Activated CD4-positive, alpha-beta memory T cell treated with anti-CD3 and anti-CD28 coated beads for 36 hours (primary cell): ENCODE measurements at regions of chr9 and their contacts with region 1.

Region 1: DNA sequence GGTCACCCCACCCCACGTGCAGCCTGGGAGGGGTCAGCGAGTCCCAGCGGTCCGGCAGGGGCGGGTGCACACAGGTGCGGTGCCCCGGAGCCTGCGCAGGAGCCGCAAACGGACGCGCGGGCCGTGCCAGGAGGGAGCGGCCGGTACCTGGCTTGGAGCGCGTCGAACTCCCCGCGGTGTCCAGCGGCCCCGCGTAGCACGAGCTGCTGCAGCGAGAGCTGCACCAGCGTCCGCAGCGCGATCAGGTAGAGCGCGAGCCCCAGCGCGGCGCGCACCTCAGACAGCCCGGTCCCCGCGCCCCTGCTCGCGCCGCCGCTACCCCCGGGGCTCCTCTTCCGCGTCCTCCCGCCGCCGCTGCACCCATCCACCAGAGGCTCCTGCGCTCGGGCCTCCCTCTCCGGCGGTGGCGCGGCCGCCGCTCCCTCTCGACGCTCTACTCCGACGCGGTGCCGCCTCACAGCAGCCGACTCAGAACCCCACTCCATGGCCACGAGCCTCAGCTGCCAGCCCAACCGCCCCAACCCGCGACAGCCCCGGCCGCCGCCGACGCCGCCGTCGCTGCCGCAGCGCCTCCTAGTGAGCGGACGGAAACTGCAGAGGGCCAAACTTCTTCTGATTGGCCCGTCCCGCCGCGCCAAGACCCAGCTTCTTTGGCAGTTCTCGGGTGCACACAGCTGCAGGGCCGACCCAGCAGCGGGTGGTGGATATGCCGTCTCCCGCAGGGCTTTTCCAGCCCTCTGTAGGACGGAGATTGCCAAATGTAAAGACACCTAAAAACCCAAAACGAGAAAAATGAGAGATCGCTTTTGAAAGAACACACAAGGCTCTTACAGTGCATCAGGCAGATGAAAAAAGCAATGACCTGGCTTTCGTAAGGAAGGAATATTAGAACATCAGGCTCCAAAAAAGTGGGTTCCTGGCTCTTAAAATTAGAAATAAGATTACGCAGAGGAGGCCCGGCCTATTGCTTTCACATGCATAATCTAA is at the start of gene ERMP1:
- DNase-seq: peak; percentile 94
- H3K4me3 Mint-ChIP-seq: peak within 1 kb of the TSS; percentile 86
- H3K27ac Mint-ChIP-seq: peak within 1 kb of the TSS; percentile 65
- H3K4me1 Mint-ChIP-seq: peaks cover 42% of the 10 kb centered on the region
- H3K27me3 Mint-ChIP-seq: no peaks in the 10 kb centered on the region
- total RNA-seq, gene ERMP1: 23.2 to 24.0 TPM

Region 2: DNA sequence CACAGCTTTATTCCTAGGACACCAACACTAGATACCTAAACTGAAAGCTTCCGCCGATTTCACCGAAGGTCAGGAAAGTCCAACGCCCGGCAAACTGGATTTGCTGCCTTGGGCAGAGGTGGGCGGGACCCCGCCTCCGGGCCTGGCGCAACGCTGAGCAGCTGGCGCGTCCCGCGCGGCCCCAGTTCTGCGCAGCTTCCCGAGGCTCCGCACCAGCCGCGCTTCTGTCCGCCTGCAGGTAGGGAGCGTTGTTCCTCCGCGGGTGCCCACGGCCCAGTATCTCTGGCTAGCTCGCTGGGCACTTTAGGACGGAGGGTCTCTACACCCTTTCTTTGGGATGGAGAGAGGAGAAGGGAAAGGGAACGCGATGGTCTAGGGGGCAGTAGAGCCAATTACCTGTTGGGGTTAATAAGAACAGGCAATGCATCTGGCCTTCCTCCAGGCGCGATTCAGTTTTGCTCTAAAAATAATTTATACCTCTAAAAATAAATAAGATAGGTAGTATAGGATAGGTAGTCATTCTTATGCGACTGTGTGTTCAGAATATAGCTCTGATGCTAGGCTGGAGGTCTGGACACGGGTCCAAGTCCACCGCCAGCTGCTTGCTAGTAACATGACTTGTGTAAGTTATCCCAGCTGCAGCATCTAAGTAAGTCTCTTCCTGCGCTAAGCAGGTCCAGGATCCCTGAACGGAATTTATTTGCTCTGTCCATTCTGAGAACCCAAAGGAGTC is 382.3 kb before region 1 on chr9 and contains the start of gene CD274:
- CTCF ChIA-PET with region 1: no interaction called
- POLR2A ChIA-PET with region 1: no interaction called
- intact Hi-C with region 1: loop called (anchors 5 kb)
- DNase-seq: peak; percentile 92
- H3K4me3 Mint-ChIP-seq: peak within 1 kb of the TSS; percentile 86
- H3K27ac Mint-ChIP-seq: peak within 1 kb of the TSS; percentile 90
- H3K4me1 Mint-ChIP-seq: peaks cover 59% of the 10 kb centered on the region
- H3K27me3 Mint-ChIP-seq: no peaks in the 10 kb centered on the region
- total RNA-seq, gene CD274: 28.3 to 32.4 TPM

Region 3: GRCh38 chr9:5799314-5799713 is 33.5 kb before region 1 on chr9:
- CTCF ChIA-PET with region 1: interaction called, 9 read pairs
- POLR2A ChIA-PET with region 1: no interaction called
- intact Hi-C with region 1: loop called (anchors 2 kb)
- DNase-seq: no peak
- H3K4me3 Mint-ChIP-seq: no peak overlapping the region
- H3K27ac Mint-ChIP-seq: no peak overlapping the region
- H3K4me1 Mint-ChIP-seq: peaks cover 22% of the 10 kb centered on the region
- H3K27me3 Mint-ChIP-seq: no peaks in the 10 kb centered on the region

Region 4: GRCh38 chr9:5843794-5844504 is 11.1 kb after region 1 on chr9:
- CTCF ChIA-PET with region 1: interaction called, 55 read pairs
- POLR2A ChIA-PET with region 1: interaction called, 13 read pairs
- intact Hi-C with region 1: loop called (anchors 1 kb)
- DNase-seq: no peak
- H3K4me3 Mint-ChIP-seq: peak overlapping the region; percentile 46
- H3K27ac Mint-ChIP-seq: peak overlapping the region; percentile 82
- H3K4me1 Mint-ChIP-seq: peaks cover 63% of the 10 kb centered on the region
- H3K27me3 Mint-ChIP-seq: no peaks in the 10 kb centered on the region

Region 5: GRCh38 chr9:5869315-5870019 is 36.6 kb after region 1 on chr9:
- CTCF ChIA-PET with region 1: interaction called, 13 read pairs
- POLR2A ChIA-PET with region 1: no interaction called
- intact Hi-C with region 1: no loop called
- DNase-seq: peak; percentile 62
- H3K4me3 Mint-ChIP-seq: no peak overlapping the region
- H3K27ac Mint-ChIP-seq: no peak overlapping the region
- H3K4me1 Mint-ChIP-seq: peaks cover 9% of the 10 kb centered on the region
- H3K27me3 Mint-ChIP-seq: no peaks in the 10 kb centered on the region